ENCODE measurements at regions of chr3 and their contacts with region 1.

Region 1: DNA sequence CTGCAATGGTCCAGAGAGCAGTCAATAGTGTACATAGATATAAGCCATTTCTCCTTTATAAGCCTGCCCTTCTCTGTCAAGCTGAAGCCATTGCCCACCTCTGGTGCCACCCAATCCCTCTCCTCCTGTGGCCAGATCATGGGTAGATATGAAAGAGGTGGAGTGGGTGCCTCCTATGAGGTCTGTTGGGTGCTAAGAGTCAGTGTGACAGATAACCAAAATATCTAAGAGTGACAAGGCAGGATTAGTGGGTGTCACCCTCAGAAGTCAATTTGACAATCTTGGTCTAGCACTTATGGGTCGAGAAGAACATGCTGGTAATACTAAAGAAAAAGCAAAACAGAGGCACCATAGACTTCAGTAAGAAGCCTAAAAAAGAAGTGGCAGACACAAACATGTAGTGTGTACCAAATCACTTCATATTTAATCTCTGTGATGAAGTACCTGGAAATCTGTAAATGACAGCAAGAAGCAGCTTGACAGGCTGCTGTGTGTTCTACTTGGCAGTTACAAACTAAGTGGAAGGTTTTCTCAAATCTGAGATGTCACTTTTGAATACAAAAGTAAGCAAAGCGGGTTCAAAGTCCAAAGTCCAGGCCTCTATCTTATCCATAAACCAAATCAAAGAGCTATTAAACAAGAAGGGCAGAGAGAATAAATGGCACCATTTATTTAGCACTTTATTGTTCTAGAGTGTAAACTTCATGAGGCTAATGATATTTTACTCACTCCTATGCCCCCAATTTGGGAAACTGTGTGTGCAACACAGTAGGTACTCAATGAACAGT is 118.9 kb upstream of the EOMES start:
- DNase-seq: no peak
- ATAC-seq: no peak; the same call in 2 of the 3 replicates
- H3K4me3 ChIP-seq: no peak overlapping the region
- H3K27ac ChIP-seq: no peak overlapping the region
- H3K4me1 ChIP-seq: no peaks in the 10 kb centered on the region
- H3K27me3 ChIP-seq: no peaks in the 10 kb centered on the region
- CTCF ChIP-seq: no peak
- EP300 ChIP-seq: no peak
- POLR2A ChIP-seq: no peak
- RAD21 ChIP-seq: no peak

Region 2: GRCh38 chr3:27827041-27827440 is 14.0 kb before region 1 on chr3:
- CTCF ChIA-PET with region 1: interaction called, 5 read pairs
- POLR2A ChIA-PET with region 1: no interaction called
- RAD21 ChIA-PET with region 1: interaction called, 3 read pairs
- SMC1A ChIA-PET with region 1: interaction called, 10 read pairs
- in situ Hi-C with region 1: no loop called
- intact Hi-C with region 1: no loop called
- DNase-seq: no peak
- ATAC-seq: peak; percentile 48; the same call in 2 of the 3 replicates
- H3K4me3 ChIP-seq: no peak overlapping the region
- H3K27ac ChIP-seq: no peak overlapping the region
- H3K4me1 ChIP-seq: no peaks in the 10 kb centered on the region
- H3K27me3 ChIP-seq: no peaks in the 10 kb centered on the region
- CTCF ChIP-seq: no peak; a peak in 1 of 6 replicates
- EP300 ChIP-seq: no peak
- POLR2A ChIP-seq: no peak
- RAD21 ChIP-seq: no peak